IMR-90 (cell line): ENCODE measurements at regions of chr12 and their contacts with region 1.

Region 1: DNA sequence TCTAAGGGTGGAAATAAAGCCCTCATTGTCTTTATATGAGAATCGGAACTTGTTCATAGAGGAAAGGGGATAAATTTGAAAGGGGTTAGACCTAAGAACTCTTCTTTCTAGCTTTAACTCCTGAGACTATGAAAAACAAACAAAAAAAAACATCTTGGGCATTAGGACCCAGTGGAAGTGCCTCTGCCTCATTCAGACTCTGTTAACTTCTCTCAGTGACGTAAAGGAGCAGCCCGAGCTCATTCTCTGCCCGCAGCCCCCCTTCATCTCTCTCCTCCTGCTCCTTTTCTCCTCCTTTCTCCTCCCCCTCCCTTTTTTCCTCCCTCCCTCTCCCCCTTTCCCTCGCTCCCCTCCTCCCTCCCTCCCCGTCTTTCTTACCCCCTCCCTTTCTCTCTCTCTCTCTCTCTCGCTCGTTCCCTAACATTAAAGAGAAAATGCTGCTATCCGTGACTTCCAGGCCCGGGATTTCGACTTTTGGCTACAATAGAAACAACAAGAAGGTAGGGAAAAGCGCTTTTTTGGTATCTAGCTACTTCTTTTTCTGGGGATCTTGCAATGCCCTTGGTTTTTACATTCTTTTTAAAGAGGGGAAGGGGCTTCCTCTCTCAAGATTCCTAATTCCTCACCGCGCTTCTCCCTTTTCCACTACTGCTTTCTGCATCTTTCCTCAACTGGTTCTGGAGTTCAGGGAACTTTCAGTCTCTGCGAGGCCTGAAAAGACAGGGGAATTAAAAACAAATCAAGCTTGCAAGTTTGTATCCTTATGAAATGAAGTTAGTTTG is at the start of gene RBMS2:
- DNase-seq: peak; percentile 94
- ATAC-seq: peak; percentile 86
- H3K4me3 ChIP-seq: peak within 1 kb of the TSS; percentile 100
- H3K27ac ChIP-seq: peak within 1 kb of the TSS; percentile 95
- H3K4me1 ChIP-seq: peaks cover 8% of the 10 kb centered on the region
- H3K27me3 ChIP-seq: no peaks in the 10 kb centered on the region
- CTCF ChIP-seq: no peak
- POLR2A ChIP-seq: no peak
- RAD21 ChIP-seq: no peak
- total RNA-seq, gene RBMS2: 28.3 and 38.0 TPM in 2 replicates

Region 2: GRCh38 chr12:56565510-56566101 is 43.8 kb after region 1 on chr12:
- CTCF ChIA-PET with region 1: interaction called, 4 read pairs
- POLR2A ChIA-PET with region 1: no interaction called
- dilution Hi-C with region 1: no loop called
- in situ Hi-C with region 1: loop called (anchors 5 kb)
- intact Hi-C with region 1: no loop called
- DNase-seq: peak; percentile 77
- ATAC-seq: peak; percentile 82
- H3K4me3 ChIP-seq: no peak overlapping the region
- H3K27ac ChIP-seq: peak overlapping the region; percentile 57; the same call in 1 of the 2 replicates
- H3K4me1 ChIP-seq: peaks cover 10% of the 10 kb centered on the region
- H3K27me3 ChIP-seq: no peaks in the 10 kb centered on the region
- CTCF ChIP-seq: no peak; the same call in 1 of the 2 replicates
- POLR2A ChIP-seq: no peak
- RAD21 ChIP-seq: no peak